Pancreas (tissue), 10 donors: ENCODE measurements at regions of chr12 and their contacts with region 1.

Region 1: GRCh38 chr12:21607701-21608100 is 3.1 kb upstream of the GYS2 start:
- DNase-seq: no peak
- ATAC-seq: peak; percentile 48 to 84 (median 76)
- H3K4me3 ChIP-seq: no peak overlapping the region
- H3K27ac ChIP-seq: no peak overlapping the region
- H3K4me1 ChIP-seq: peaks cover 0 to 7% (median under 1%) of the 10 kb centered on the region in 3 donors
- H3K27me3 ChIP-seq: no peaks in the 10 kb centered on the region
- CTCF ChIP-seq: peak in 2 of 4 donors; percentile 20 to 30

Region 2: DNA sequence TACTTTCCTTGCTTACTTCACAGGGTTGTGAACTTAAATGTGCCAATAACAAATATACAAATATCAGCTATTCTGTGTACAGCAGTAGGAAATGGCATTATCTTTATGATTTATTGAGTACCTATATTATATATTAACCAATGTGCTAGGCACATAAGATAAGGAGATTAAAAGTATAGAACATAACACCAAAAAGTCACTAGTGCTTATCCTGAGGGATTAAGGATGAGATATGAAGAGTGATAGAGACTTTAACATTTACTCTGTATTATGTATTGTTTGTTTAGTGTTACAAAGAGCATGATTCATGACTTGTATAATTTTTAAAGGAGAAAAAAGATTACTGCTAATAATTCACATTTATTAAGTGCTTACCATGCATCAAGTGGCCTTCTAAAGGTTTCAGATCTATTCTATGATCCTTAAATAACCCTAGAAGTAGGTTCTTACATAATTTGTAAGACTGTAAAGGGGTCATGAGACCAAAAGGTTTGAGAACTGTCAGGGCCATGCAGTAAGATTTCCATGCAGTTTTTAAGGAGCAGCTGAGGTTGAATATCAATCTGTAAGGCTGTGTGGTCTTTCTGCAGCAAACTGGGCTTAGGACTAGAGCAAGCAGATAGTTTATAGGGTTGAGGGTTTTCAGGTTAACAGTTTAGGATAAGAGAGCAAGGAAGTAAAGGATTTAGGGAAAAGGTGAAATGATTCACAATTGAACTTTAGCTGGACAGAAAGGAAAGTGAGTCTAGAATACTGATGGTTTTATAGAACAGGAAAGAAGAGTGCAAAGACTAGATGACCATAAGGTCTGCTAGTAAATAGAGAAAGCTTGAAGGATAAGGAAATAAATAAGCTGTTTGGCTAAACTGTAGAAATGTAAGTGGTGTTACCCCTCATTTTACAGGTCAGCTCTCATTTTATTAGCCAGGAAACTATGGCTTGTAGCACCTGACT is 163.2 kb before region 1 on chr12:
- intact Hi-C with region 1: no loop called
- DNase-seq: no peak
- ATAC-seq: peak; percentile 27 to 56 (median 40)
- H3K4me3 ChIP-seq: no peak overlapping the region
- H3K27ac ChIP-seq: no peak overlapping the region
- H3K4me1 ChIP-seq: peaks cover 5 to 16% (median 14%) of the 10 kb centered on the region in 3 donors
- H3K27me3 ChIP-seq: no peaks in the 10 kb centered on the region
- CTCF ChIP-seq: no peak

Region 3: GRCh38 chr12:21677622-21678277 is 70.0 kb after region 1 on chr12:
- intact Hi-C with region 1: loop called in 2 of 3 experiments (anchors 5 to 10 kb)
- DNase-seq: no peak
- ATAC-seq: no peak
- H3K4me3 ChIP-seq: no peak overlapping the region
- H3K27ac ChIP-seq: no peak overlapping the region
- H3K4me1 ChIP-seq: no peaks in the 10 kb centered on the region
- H3K27me3 ChIP-seq: no peaks in the 10 kb centered on the region
- CTCF ChIP-seq: no peak

Region 4: DNA sequence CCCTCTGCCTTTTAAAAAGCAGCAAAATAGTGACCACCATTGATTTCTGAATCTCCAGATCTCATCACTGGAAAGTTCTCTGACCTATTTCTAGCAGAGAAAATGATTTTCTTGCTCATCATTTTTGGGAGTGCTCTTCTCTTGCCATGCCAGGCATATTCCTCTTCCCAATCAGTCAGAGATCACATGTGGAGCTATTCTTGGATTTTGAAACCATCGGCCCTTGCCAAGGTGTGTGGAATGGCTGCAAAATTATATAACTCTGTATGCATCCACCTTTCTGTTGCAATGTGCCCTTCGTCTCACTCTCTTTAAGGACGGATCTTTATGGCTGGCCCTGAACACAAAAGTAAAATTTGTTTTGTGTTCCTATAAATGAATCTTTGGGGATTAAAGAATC is 75.4 kb after region 1 on chr12:
- intact Hi-C with region 1: loop called in 2 of 3 experiments (anchors 5 to 10 kb)
- DNase-seq: no peak
- ATAC-seq: no peak
- H3K4me3 ChIP-seq: no peak overlapping the region
- H3K27ac ChIP-seq: no peak overlapping the region
- H3K4me1 ChIP-seq: no peaks in the 10 kb centered on the region
- H3K27me3 ChIP-seq: no peaks in the 10 kb centered on the region
- CTCF ChIP-seq: no peak

Region 5: DNA sequence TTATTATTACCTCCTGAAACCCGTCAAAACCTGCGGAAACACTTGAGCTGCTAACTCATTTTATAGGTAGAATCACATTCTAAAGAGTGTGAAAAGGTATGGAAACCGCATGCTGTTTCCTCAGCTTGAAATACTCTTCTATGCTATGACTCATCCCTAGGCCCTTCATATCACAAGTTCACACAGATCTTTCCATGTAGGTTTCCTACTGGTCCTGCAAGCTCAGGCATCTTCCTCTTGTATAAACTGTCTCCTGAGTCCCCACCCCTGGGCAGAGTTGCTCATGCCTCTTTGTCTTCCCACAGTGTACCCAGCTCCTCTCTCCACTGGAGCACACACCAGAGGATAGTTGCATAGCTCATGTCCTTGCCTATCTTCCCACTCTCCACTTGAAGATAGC is 523.0 kb after region 1 on chr12:
- intact Hi-C with region 1: no loop called
- DNase-seq: no peak
- ATAC-seq: no peak
- H3K4me3 ChIP-seq: no peak overlapping the region
- H3K27ac ChIP-seq: no peak overlapping the region
- H3K4me1 ChIP-seq: no peaks in the 10 kb centered on the region
- H3K27me3 ChIP-seq: no peaks in the 10 kb centered on the region
- CTCF ChIP-seq: no peak